Common myeloid progenitor, CD34-positive (primary cell): ENCODE measurements at regions of chr11 and their contacts with region 1.

Region 1: GRCh38 chr11:45102810-45103621 is 43.4 kb upstream of the PRDM11 start:
- DNase-seq: peak; percentile 58 to 72 (median 59)
- H3K4me3 ChIP-seq: no peak overlapping the region
- H3K27ac ChIP-seq: no peak overlapping the region
- H3K4me1 ChIP-seq: peaks cover 0 to 18% (median 9%) of the 10 kb centered on the region in 4 experiments
- H3K27me3 ChIP-seq: peaks cover 0 to 3% (median 0%) of the 10 kb centered on the region in 5 experiments

Region 2: DNA sequence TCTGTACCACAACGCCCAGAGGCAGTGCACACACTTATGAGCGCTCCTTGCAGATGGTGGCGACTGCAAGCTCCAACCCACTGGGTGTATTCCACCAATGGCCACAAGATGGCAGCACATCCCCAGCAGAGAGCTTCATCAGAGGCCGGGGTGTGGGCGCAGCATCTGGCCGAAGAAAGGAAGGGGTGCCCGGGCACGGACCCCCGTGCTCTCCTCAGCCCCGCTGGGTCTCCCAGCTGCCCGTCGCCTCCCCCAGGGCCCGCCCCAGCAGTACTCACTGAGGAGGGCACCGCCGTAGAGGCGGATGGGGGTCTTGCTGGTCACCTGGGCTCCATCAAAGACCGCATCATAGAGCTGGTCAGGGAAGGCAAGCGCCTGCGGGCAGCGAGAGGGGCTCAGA is 166.5 kb before region 1 on chr11:
- CTCF ChIA-PET with region 1: interaction called, 1,197 read pairs
- POLR2A ChIA-PET with region 1: interaction called, 7 read pairs
- DNase-seq: peak; percentile 79 to 90 (median 83)
- H3K4me3 ChIP-seq: no peak overlapping the region
- H3K27ac ChIP-seq: no peak overlapping the region
- H3K4me1 ChIP-seq: peaks cover 0 to 20% (median 13%) of the 10 kb centered on the region in 4 experiments
- H3K27me3 ChIP-seq: no peaks in the 10 kb centered on the region

Region 3: GRCh38 chr11:44964526-44965209 is 138.3 kb before region 1 on chr11:
- CTCF ChIA-PET with region 1: interaction called, 16 read pairs
- POLR2A ChIA-PET with region 1: no interaction called
- DNase-seq: no peak
- H3K4me3 ChIP-seq: no peak overlapping the region
- H3K27ac ChIP-seq: no peak overlapping the region
- H3K4me1 ChIP-seq: peaks cover 0 to 18% (median 7%) of the 10 kb centered on the region in 4 experiments
- H3K27me3 ChIP-seq: no peaks in the 10 kb centered on the region

Region 4: GRCh38 chr11:45079943-45080719 is 22.9 kb before region 1 on chr11:
- CTCF ChIA-PET with region 1: interaction called, 17 read pairs
- POLR2A ChIA-PET with region 1: no interaction called
- DNase-seq: peak; percentile 59 to 84 (median 77)
- H3K4me3 ChIP-seq: peak overlapping the region in 1 of 7 experiments; percentile 32
- H3K27ac ChIP-seq: no peak overlapping the region
- H3K4me1 ChIP-seq: peaks cover 19 to 61% (median 46%) of the 10 kb centered on the region in 4 experiments
- H3K27me3 ChIP-seq: no peaks in the 10 kb centered on the region

Region 5: DNA sequence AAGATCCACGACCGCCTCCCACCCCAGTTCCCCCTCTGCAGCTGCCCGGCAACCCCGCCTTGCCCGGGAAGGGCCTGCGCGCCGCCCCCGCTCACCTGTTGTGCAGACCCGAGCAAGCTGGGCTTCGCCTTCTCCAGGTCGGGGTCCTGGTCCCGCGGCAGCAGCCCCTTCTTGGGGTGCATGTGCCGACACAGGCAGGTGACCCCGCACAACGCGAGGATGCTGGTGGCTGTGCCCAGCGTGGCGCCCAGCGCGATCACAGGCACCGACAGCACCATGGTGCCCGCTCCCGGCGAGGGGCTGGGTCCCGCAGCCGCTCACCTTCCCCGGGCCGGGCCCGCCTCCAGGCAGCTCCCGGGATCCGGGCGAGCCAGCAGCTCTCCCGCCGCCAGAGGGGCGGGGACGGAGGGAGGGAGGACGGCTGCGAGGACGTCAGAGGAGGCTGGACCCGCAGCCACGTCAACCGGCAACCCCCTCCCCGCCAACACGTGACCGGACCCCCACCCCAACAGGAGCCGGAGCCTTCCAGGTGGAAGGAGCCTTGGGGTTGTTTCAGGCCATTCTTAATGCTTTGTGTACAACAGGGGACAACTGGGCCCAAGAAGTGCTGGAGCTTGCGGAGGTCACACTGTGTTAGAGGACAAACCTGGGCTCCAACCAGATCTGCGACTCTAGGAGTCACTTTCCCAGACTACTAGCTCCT is 183.1 kb after region 1 on chr11 and contains the start of gene SYT13:
- CTCF ChIA-PET with region 1: interaction called, 23 read pairs
- POLR2A ChIA-PET with region 1: no interaction called
- DNase-seq: no peak
- H3K4me3 ChIP-seq: peak within 1 kb of the TSS in 4 of 7 experiments; percentile 5 to 57 (median 38)
- H3K27ac ChIP-seq: no peak within 1 kb of the TSS
- H3K4me1 ChIP-seq: peaks cover 0 to 12% (median 3%) of the 10 kb centered on the region in 4 experiments
- H3K27me3 ChIP-seq: peaks cover 12 to 67% (median 36%) of the 10 kb centered on the region in 5 experiments